Endothelial cell of umbilical vein (primary cell): ENCODE measurements at regions of chr17 and their contacts with region 1.

Region 1: DNA sequence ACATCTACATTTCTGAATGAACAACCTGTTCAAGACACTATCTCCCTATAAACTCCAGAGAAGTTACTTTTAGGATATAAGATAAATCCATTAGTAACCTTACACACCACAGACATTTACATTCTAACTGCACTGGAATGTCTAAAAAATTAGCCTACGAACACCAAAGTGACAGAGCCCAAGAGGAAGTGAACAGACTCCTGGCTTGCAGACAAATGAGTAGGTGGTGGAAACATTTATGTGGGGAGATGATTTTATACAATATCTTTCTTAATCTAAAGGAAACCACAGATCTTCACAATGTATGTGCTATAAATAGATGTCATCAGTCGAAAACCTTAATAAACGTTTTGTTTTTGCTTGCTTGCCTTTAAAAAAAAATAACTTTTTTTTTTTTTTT is 18.8 kb downstream of the ZNF652 start:
- DNase-seq: peak; percentile 14
- H3K4me3 ChIP-seq: no peak overlapping the region
- H3K27ac ChIP-seq: no peak overlapping the region
- H3K4me1 ChIP-seq: no peaks in the 10 kb centered on the region
- H3K27me3 ChIP-seq: no peaks in the 10 kb centered on the region
- CTCF ChIP-seq: no peak
- POLR2A ChIP-seq: no peak

Region 2: GRCh38 chr17:49361902-49362722 is 18.8 kb after region 1 on chr17 and contains the start of gene ZNF652:
- CTCF ChIA-PET with region 1: interaction called, 6 read pairs
- POLR2A ChIA-PET with region 1: interaction called, 10 read pairs
- dilution Hi-C with region 1: no loop called
- intact Hi-C with region 1: no loop called
- DNase-seq: peak; percentile 86
- H3K4me3 ChIP-seq: peak within 1 kb of the TSS; percentile 68 to 75 (median 70)
- H3K27ac ChIP-seq: peak within 1 kb of the TSS; percentile 34
- H3K4me1 ChIP-seq: peaks cover 19% of the 10 kb centered on the region
- H3K27me3 ChIP-seq: no peaks in the 10 kb centered on the region
- CTCF ChIP-seq: no peak
- POLR2A ChIP-seq: no peak
- total RNA-seq, gene ZNF652: 18.2 and 18.6 TPM in 2 replicates

Region 3: DNA sequence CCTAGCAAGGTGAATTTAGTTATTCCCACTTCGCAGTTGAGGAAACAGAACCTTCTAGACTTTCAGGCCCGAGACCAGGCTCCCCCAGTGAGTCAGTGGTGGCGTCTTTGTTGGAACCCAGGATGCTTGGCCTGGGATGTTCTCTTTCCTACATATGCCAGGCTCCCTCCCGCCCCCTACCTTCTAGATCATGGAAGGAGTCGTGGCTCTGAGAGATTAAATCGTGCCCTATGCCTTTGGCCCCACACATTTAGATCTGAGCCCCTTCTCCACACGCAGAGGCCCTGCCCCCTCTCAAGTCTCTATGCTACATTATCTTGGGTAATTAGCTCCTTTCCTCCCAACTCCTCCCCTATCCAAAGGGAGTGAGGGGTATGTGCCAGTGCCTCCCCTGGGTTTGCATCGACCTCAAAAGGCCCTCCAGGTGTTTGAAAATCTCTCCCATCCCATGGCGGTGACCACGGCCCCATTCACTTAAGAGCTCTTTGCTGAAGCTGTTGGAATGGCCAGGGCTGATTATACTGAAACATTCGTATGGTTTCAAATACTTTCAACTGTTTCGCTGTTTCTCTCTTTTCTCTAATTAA is 154.8 kb after region 1 on chr17:
- CTCF ChIA-PET with region 1: no interaction called
- POLR2A ChIA-PET with region 1: no interaction called
- dilution Hi-C with region 1: no loop called
- intact Hi-C with region 1: no loop called
- DNase-seq: no peak
- H3K4me3 ChIP-seq: no peak overlapping the region
- H3K27ac ChIP-seq: no peak overlapping the region
- H3K4me1 ChIP-seq: peaks cover 10% of the 10 kb centered on the region
- H3K27me3 ChIP-seq: peaks cover 68 to 69% of the 10 kb centered on the region in 2 experiments
- CTCF ChIP-seq: no peak
- POLR2A ChIP-seq: no peak